Activated naive CD4-positive, alpha-beta T cell treated with anti-CD3 and anti-CD28 coated beads for 36 hours (primary cell): ENCODE measurements at regions of chr3 and their contacts with region 1.

Region 1: GRCh38 chr3:165185707-165186327 is 10.4 kb downstream of the SLITRK3 start:
- DNase-seq: peak; percentile 55
- H3K4me3 Mint-ChIP-seq: no peak overlapping the region
- H3K27ac Mint-ChIP-seq: no peak overlapping the region
- H3K4me1 Mint-ChIP-seq: no peaks in the 10 kb centered on the region
- H3K27me3 Mint-ChIP-seq: peaks cover 13% of the 10 kb centered on the region

Region 2: GRCh38 chr3:164049556-164050220 is 1136.1 kb before region 1 on chr3:
- CTCF ChIA-PET with region 1: no interaction called
- intact Hi-C with region 1: loop called (anchors 10 kb)
- DNase-seq: no peak
- H3K4me3 Mint-ChIP-seq: no peak overlapping the region
- H3K27ac Mint-ChIP-seq: no peak overlapping the region
- H3K4me1 Mint-ChIP-seq: no peaks in the 10 kb centered on the region
- H3K27me3 Mint-ChIP-seq: no peaks in the 10 kb centered on the region